Colonic mucosa (tissue), 4 donors: ENCODE measurements at regions of chr3 and their contacts with region 1.

Region 1: DNA sequence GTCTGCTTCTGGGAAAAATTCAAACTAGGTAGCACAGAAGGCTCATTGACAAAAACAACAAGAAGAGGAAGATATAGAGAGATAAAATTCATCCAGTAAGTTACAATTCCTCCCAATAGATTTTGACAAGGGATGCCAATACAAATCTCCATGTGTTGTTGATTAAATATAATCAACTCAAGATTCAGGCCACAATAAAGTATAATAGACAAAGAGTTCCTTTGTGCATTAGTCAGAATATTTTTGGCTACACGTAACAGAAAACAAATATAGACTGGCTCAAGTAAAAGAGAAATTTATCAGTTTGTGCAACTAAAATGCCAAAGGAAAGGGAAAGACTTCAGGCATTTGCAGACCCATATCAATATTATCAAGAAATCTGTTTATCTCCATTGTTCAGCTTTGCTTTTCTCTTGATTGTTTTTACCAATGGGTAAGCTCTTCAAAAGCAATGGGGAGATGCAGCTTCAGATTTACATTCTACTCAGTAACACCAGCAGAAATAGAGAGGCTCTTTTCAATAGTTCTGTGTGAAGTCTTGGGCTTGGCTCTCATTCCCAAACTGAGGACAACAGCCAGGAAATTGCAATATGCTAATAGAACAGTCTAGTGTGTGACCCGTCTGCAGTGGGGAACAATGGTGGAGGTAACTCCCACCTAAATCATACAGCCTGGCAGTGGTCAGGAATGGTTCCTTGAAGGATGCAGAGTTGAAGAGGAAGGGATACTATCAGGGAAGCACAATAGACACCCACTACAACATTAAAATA is 77.6 kb upstream of the PROK2 start:
- DNase-seq: no peak
- H3K4me3 ChIP-seq: no peak overlapping the region
- H3K27ac ChIP-seq: no peak overlapping the region
- H3K4me1 ChIP-seq: no peaks in the 10 kb centered on the region
- H3K27me3 ChIP-seq: no peaks in the 10 kb centered on the region
- CTCF ChIP-seq: no peak

Region 2: GRCh38 chr3:71734883-71735282 is 127.7 kb before region 1 on chr3:
- intact Hi-C with region 1: loop called (anchors 10 kb)
- DNase-seq: no peak
- H3K4me3 ChIP-seq: no peak overlapping the region
- H3K27ac ChIP-seq: no peak overlapping the region
- H3K4me1 ChIP-seq: no peaks in the 10 kb centered on the region
- H3K27me3 ChIP-seq: no peaks in the 10 kb centered on the region
- CTCF ChIP-seq: no peak